ENCODE measurements at regions of chr6 and their contacts with region 1.

Region 1: GRCh38 chr6:76466286-76466685 is 393.8 kb upstream of the IMPG1 start:
- DNase-seq: no peak
- H3K4me3 ChIP-seq: no peak overlapping the region
- H3K27ac ChIP-seq: no peak overlapping the region
- H3K4me1 ChIP-seq: no peaks in the 10 kb centered on the region
- H3K27me3 ChIP-seq: no peaks in the 10 kb centered on the region
- CTCF ChIP-seq: no peak
- POLR2A ChIP-seq: no peak

Region 2: GRCh38 chr6:76240092-76240491 is 226.2 kb before region 1 on chr6:
- intact Hi-C with region 1: loop called (anchors 5 kb)
- DNase-seq: no peak
- H3K4me3 ChIP-seq: no peak overlapping the region
- H3K27ac ChIP-seq: no peak overlapping the region
- H3K4me1 ChIP-seq: no peaks in the 10 kb centered on the region
- H3K27me3 ChIP-seq: no peaks in the 10 kb centered on the region
- CTCF ChIP-seq: no peak
- POLR2A ChIP-seq: no peak

Region 3: DNA sequence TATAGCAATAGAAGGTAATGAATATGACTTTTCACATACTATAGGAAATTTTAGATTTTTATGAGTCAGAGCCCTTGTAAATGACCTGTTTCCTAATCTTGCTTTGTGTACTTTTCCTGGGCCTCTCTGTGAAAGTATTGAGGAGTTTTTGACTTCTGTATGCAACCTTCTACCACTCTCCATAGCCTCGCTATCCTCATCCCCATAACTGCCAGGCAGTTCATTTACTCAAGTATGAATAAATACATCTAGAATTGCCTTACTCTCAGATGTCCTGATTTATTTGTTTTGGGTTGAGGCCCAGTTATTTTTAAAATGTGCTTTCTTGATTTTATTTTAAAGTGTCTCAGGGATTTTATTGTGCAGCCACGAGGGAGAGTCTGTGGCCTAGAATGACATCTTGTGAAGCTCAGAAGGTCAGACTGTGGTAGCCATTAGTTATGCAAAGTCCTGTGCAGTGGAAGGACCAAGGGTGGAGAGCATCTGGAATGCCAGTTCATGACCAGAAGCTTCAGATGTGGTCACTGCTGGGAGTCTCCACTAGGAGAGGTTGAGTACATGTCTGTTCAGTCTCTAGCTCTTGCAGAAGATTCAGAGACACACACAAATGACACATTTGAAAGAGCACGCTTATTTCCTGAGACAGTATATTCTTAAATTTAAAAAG is 47.6 kb before region 1 on chr6:
- intact Hi-C with region 1: no loop called
- DNase-seq: no peak
- H3K4me3 ChIP-seq: no peak overlapping the region
- H3K27ac ChIP-seq: no peak overlapping the region
- H3K4me1 ChIP-seq: no peaks in the 10 kb centered on the region
- H3K27me3 ChIP-seq: no peaks in the 10 kb centered on the region
- CTCF ChIP-seq: no peak
- POLR2A ChIP-seq: no peak